Kidney (tissue), 22 donors: ENCODE measurements at regions of chr10 and their contacts with region 1.

Region 1: DNA sequence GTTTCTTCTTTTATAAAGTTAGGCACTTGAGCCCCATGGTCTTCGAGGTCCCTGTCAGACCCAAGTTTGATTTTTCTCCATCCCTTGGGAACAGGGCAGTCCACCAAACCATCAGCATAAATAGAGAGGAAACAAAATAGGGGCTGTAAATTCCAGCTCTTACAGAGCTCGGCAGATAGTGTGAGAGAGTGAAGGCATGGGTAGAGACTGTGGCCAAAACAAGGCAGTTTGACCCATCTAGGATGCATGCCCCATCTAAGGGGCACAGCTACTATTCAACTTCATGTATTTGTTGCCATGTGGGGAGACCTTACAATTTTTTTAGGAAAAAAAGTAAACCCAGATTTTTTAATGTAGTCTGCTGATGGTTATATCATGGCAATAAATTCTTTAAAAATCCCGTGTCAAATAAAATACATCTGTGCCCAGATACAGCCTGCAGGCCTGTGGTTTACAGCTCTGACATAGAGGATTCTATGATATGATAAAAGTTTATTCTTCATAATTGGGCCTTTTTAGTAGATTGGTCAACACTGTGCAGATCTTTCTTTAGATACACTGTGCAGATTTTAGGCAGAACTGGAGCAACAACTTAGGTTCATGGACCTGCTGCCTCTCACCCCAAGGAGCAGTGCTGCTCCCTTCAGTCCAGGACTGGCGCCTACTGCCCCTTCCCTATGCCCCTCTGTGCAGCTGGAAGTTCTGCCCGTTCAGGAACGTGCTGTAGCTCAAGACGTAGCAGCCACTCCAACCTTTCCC is 5.3 kb downstream of the PPP1R3C start:
- DNase-seq: no peak
- H3K4me3 ChIP-seq: peak overlapping the region in 1 of 3 donors; percentile 54
- H3K27ac ChIP-seq: no peak overlapping the region
- H3K4me1 ChIP-seq: peaks cover 0 to 7% (median 0%) of the 10 kb centered on the region in 3 donors
- H3K27me3 ChIP-seq: no peaks in the 10 kb centered on the region
- CTCF ChIP-seq: no peak

Region 2: DNA sequence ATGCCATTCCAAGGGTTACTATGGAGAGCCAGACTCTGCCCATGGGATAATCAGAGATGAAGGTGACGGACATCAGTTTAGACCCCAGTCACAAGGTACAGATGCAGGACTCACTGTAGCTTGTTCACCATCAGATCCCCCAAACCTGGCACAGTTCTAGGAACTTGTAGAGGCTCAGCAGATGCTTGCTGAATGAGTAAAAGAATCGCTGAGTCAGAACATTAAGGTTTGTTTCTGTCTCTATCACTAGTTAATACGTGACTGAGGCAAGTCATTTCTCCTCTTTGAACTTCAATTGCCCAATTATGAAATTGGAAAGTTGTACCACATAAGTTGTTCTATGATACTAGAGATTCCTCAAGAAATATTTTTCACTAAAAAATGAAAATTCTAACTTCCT is 59.7 kb before region 1 on chr10:
- intact Hi-C with region 1: loop called (anchors 10 kb)
- DNase-seq: no peak
- H3K4me3 ChIP-seq: no peak overlapping the region
- H3K27ac ChIP-seq: no peak overlapping the region
- H3K4me1 ChIP-seq: no peaks in the 10 kb centered on the region
- H3K27me3 ChIP-seq: no peaks in the 10 kb centered on the region
- CTCF ChIP-seq: no peak

Region 3: DNA sequence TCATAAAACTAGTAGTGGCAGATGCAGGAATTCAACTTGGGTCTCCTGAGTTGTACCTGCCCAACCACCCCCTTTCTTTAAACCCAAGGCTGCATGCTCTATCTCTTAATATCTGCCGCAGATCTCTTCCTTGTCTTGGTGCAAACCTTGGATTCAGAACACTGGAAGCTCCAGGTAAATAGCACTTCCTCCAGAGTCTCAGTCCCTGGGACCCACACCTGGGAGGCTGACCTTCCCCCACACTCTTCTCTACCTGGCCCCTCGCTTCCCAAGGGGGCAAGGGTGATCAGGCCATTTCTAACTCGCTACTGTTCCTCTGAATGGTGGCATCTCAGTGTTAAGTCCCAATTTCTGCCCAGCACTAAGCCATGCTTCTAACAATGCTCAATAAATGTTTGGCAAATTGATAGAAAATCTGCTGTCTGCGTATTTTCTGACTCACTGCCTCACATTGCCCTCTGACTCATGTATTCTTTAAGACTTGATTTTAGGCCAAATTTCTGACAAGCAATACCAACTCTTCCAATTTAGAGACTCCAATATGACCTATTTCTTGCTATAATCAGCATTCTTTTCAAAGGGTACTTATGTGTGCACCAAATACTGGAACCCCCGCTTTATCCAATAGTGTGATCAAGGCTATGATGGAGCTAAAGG is 73.4 kb after region 1 on chr10:
- intact Hi-C with region 1: no loop called
- DNase-seq: no peak
- H3K4me3 ChIP-seq: no peak overlapping the region
- H3K27ac ChIP-seq: no peak overlapping the region
- H3K4me1 ChIP-seq: peaks cover 0 to 6% (median 2%) of the 10 kb centered on the region in 3 donors
- H3K27me3 ChIP-seq: no peaks in the 10 kb centered on the region
- CTCF ChIP-seq: no peak